Activated naive CD4-positive, alpha-beta T cell treated with anti-CD3 and anti-CD28 coated beads for 36 hours (primary cell): ENCODE measurements at regions of chr3 and their contacts with region 1.

Region 1: GRCh38 chr3:46705022-46705530 is 3.9 kb downstream of the TMIE start:
- DNase-seq: peak; percentile 81
- H3K4me3 Mint-ChIP-seq: no peak overlapping the region
- H3K27ac Mint-ChIP-seq: no peak overlapping the region
- H3K4me1 Mint-ChIP-seq: peaks cover 10% of the 10 kb centered on the region
- H3K27me3 Mint-ChIP-seq: no peaks in the 10 kb centered on the region

Region 2: DNA sequence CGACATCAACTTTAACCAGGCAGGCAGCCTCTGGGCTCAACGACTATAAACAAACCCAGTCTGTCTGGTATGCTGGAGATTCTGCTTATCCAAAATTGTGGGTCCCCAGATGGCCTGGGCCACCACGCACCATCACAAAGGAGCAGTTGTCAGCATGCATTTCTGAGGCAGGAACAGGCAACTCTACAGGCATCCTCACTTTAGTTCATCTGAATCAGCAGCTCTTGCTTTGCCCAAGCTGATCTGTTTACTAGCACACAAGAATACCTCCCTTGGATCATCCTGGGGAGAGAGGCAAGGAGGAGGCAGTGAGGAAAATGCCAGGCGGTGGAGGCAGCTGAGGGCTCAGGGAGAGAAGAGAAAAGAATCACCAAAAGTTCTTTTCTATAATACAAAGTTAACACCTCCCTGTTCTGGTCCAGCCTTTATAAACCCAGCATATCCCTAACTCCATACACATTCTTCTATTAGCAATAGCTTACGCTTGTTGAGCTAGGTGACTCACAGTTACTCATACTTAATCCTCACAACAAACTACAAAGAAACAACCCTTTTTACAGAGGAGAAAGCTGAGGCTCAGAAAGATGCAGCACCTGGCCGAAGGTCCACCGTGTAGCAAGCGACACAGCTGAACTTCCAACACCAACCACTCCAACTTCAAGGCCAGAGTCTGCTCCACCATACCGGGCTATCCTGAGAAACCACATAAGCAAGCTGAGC is 1762.7 kb before region 1 on chr3:
- CTCF ChIA-PET with region 1: no interaction called
- intact Hi-C with region 1: no loop called
- DNase-seq: no peak
- H3K4me3 Mint-ChIP-seq: no peak overlapping the region
- H3K27ac Mint-ChIP-seq: no peak overlapping the region
- H3K4me1 Mint-ChIP-seq: no peaks in the 10 kb centered on the region
- H3K27me3 Mint-ChIP-seq: no peaks in the 10 kb centered on the region

Region 3: GRCh38 chr3:46742992-46743585 is 38.0 kb after region 1 on chr3:
- CTCF ChIA-PET with region 1: no interaction called
- intact Hi-C with region 1: no loop called
- DNase-seq: no peak
- H3K4me3 Mint-ChIP-seq: no peak overlapping the region
- H3K27ac Mint-ChIP-seq: no peak overlapping the region
- H3K4me1 Mint-ChIP-seq: no peaks in the 10 kb centered on the region
- H3K27me3 Mint-ChIP-seq: no peaks in the 10 kb centered on the region

Region 4: GRCh38 chr3:46909535-46910442 is 204.7 kb after region 1 on chr3:
- CTCF ChIA-PET with region 1: interaction called, 5 read pairs
- intact Hi-C with region 1: loop called (anchors 1 kb)
- DNase-seq: peak; percentile 91
- H3K4me3 Mint-ChIP-seq: no peak overlapping the region
- H3K27ac Mint-ChIP-seq: no peak overlapping the region
- H3K4me1 Mint-ChIP-seq: peaks cover 10% of the 10 kb centered on the region
- H3K27me3 Mint-ChIP-seq: no peaks in the 10 kb centered on the region

Region 5: GRCh38 chr3:47324278-47324865 is 619.3 kb after region 1 on chr3:
- CTCF ChIA-PET with region 1: no interaction called
- intact Hi-C with region 1: loop called (anchors 1 kb)
- DNase-seq: peak; percentile 66
- H3K4me3 Mint-ChIP-seq: no peak overlapping the region
- H3K27ac Mint-ChIP-seq: no peak overlapping the region
- H3K4me1 Mint-ChIP-seq: no peaks in the 10 kb centered on the region
- H3K27me3 Mint-ChIP-seq: no peaks in the 10 kb centered on the region